ENCODE measurements at regions of chr18 and their contacts with region 1.

Region 1: GRCh38 chr18:77132371-77133050 is at the start of gene MBP:
- DNase-seq: peak; percentile 40 to 85 (median 75)
- ATAC-seq: peak; percentile 58
- H3K4me3 ChIP-seq: peak within 1 kb of the TSS; percentile 70 to 76
- H3K4me3 Mint-ChIP-seq: peak within 1 kb of the TSS; percentile 95
- H3K27ac ChIP-seq: peak within 1 kb of the TSS; percentile 69 to 80
- H3K27ac Mint-ChIP-seq: peak within 1 kb of the TSS; percentile 95
- H3K4me1 ChIP-seq: peaks cover 52% of the 10 kb centered on the region
- H3K4me1 Mint-ChIP-seq: peaks cover 57% of the 10 kb centered on the region
- H3K27me3 ChIP-seq: no peaks in the 10 kb centered on the region
- H3K27me3 Mint-ChIP-seq: no peaks in the 10 kb centered on the region
- CTCF ChIP-seq: no peak
- total RNA-seq, gene MBP: 67.9 to 70.7 TPM

Region 2: GRCh38 chr18:76822510-76823160 is 309.9 kb before region 1 on chr18 and contains the start of gene ZNF236:
- CTCF ChIA-PET with region 1: no interaction called
- POLR2A ChIA-PET with region 1: interaction called, 3 read pairs
- intact Hi-C with region 1: loop called in 1 of 2 experiments (anchors 10 kb)
- DNase-seq: peak; percentile 43 to 86 (median 68)
- ATAC-seq: peak; percentile 50
- H3K4me3 ChIP-seq: peak within 1 kb of the TSS; percentile 75 to 97
- H3K4me3 Mint-ChIP-seq: peak within 1 kb of the TSS; percentile 93
- H3K27ac ChIP-seq: peak within 1 kb of the TSS; percentile 67 to 91
- H3K27ac Mint-ChIP-seq: peak within 1 kb of the TSS; percentile 96
- H3K4me1 ChIP-seq: peaks cover 28% of the 10 kb centered on the region
- H3K4me1 Mint-ChIP-seq: peaks cover 50% of the 10 kb centered on the region
- H3K27me3 ChIP-seq: no peaks in the 10 kb centered on the region
- H3K27me3 Mint-ChIP-seq: no peaks in the 10 kb centered on the region
- CTCF ChIP-seq: no peak
- total RNA-seq, gene ZNF236: 24.9 to 25.4 TPM

Region 3: DNA sequence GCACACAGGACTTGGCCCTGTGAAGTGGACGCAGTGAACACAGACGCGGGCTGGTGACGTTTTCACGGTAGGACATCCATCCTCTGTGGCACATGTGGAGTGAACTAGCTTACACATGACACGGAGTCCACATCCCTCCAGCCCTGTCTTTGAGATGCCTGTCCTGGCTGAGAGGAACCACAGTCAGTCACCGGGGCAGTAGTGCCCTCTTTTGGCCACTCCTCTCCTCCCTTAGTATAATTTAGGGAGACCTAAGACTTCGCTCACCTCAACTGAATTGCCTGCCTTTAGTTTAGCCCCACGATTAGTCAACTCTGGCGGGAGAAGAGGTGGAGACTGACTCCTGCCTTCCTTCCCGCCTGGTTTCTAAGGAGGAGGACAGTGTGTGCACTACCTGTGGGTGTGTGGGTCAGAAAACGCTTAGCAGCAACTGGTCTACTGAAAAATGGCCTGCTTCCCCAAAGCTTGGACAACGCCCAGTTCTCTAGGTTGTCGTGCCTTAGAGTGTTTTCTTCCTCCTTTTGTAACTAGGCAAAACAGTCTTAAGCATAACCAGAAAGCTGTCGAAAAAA is 70.5 kb before region 1 on chr18:
- CTCF ChIA-PET with region 1: interaction called, 9 read pairs
- POLR2A ChIA-PET with region 1: interaction called, 24 read pairs
- intact Hi-C with region 1: loop called (anchors 2 kb)
- DNase-seq: peak in 4 of 9 experiments; percentile 38 to 71 (median 51)
- ATAC-seq: peak; percentile 6
- H3K4me3 ChIP-seq: peak overlapping the region in 1 of 2 experiments; percentile 9
- H3K4me3 Mint-ChIP-seq: peak overlapping the region; percentile 33
- H3K27ac ChIP-seq: peak overlapping the region; percentile 80 to 86
- H3K27ac Mint-ChIP-seq: peak overlapping the region; percentile 99
- H3K4me1 ChIP-seq: peaks cover 80% of the 10 kb centered on the region
- H3K4me1 Mint-ChIP-seq: peaks cover 83% of the 10 kb centered on the region
- H3K27me3 ChIP-seq: no peaks in the 10 kb centered on the region
- H3K27me3 Mint-ChIP-seq: no peaks in the 10 kb centered on the region
- CTCF ChIP-seq: no peak

Region 4: DNA sequence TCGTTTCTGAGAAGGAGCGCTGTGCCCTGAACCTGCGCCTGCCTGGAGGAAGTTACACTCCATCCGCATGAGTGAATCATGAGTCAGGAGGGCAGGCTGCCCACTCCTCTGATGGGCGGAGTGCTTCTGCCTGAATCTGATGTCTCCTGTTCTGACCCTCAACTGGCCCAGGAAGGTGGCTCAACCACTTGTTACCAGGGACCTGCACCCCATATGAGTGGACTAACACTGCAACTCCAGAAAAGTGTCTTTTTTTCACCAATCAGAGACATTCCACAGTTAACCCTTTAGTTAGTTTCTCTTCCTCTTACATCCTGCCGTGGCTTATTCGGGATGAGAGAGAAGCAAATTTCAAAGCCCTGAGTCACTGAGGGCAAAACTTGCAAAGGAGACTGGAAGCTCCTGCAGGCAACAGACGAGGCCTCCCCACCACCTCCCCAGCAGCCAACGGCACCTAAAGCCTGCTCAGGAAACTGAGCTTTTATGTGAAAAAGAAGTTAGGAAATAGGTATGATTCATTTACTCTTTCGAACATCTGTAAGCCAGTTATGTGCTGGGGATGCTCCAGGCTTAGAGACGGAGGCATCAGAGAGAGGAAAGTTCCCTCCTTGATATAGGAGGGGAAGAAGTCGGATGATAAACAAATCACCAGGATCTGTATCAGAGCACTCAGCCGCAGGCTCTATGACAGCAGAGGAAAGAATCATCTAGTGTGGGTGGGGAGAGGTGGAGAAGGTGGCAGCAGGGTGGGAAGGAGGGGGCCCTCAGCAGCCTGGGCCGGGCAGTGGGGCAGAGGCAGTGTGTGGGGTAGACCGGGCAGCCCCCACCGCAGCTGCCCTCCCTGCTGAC is 30.9 kb before region 1 on chr18:
- CTCF ChIA-PET with region 1: interaction called, 3 read pairs
- POLR2A ChIA-PET with region 1: interaction called, 63 read pairs
- intact Hi-C with region 1: loop called in 1 of 2 experiments (anchors 5 kb)
- DNase-seq: peak in 7 of 9 experiments; percentile 28 to 74 (median 54)
- ATAC-seq: peak; percentile 15
- H3K4me3 ChIP-seq: peak overlapping the region; percentile 16 to 26
- H3K4me3 Mint-ChIP-seq: peak overlapping the region; percentile 79
- H3K27ac ChIP-seq: peak overlapping the region; percentile 63 to 87
- H3K27ac Mint-ChIP-seq: peak overlapping the region; percentile 99
- H3K4me1 ChIP-seq: peaks cover 94% of the 10 kb centered on the region
- H3K4me1 Mint-ChIP-seq: peaks cover 94% of the 10 kb centered on the region
- H3K27me3 ChIP-seq: no peaks in the 10 kb centered on the region
- H3K27me3 Mint-ChIP-seq: no peaks in the 10 kb centered on the region
- CTCF ChIP-seq: no peak

Region 5: GRCh38 chr18:77147418-77147852 is 14.9 kb after region 1 on chr18:
- CTCF ChIA-PET with region 1: interaction called, 4 read pairs
- POLR2A ChIA-PET with region 1: interaction called, 10 read pairs
- intact Hi-C with region 1: no loop called
- DNase-seq: peak in 4 of 9 experiments; percentile 36 to 60 (median 40)
- ATAC-seq: peak; percentile 88
- H3K4me3 ChIP-seq: no peak overlapping the region
- H3K4me3 Mint-ChIP-seq: peak overlapping the region; percentile 6
- H3K27ac ChIP-seq: peak overlapping the region in 1 of 2 experiments; percentile 52
- H3K27ac Mint-ChIP-seq: peak overlapping the region; percentile 85
- H3K4me1 ChIP-seq: peaks cover 22% of the 10 kb centered on the region
- H3K4me1 Mint-ChIP-seq: peaks cover 27% of the 10 kb centered on the region
- H3K27me3 ChIP-seq: no peaks in the 10 kb centered on the region
- H3K27me3 Mint-ChIP-seq: no peaks in the 10 kb centered on the region
- CTCF ChIP-seq: no peak

Region 6: DNA sequence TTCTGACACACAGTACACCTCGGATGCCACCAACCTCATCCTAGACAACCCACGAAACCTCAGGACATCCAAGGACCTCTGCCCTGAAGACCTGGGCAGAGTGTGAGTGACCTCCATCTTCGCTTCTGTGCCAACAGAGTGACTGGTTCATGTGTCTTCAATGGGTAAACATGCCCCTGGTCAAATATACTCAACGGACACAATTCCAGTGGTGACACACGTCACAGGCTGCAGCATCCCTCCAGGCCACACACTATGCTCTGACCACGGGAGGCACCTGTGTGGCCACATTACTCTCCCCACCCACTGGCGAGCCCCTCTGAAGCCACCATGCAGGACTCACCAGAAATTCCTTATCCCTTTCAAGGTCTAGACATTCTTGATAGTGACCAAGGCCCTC is 202.4 kb after region 1 on chr18:
- CTCF ChIA-PET with region 1: no interaction called
- POLR2A ChIA-PET with region 1: no interaction called
- intact Hi-C with region 1: no loop called
- DNase-seq: no peak
- ATAC-seq: no peak
- H3K4me3 ChIP-seq: no peak overlapping the region
- H3K4me3 Mint-ChIP-seq: no peak overlapping the region
- H3K27ac ChIP-seq: no peak overlapping the region
- H3K27ac Mint-ChIP-seq: no peak overlapping the region
- H3K4me1 ChIP-seq: no peaks in the 10 kb centered on the region
- H3K4me1 Mint-ChIP-seq: no peaks in the 10 kb centered on the region
- H3K27me3 ChIP-seq: no peaks in the 10 kb centered on the region
- H3K27me3 Mint-ChIP-seq: peaks cover 34% of the 10 kb centered on the region
- CTCF ChIP-seq: no peak